ENCODE measurements at regions of chr11 and their contacts with region 1.

Region 1: DNA sequence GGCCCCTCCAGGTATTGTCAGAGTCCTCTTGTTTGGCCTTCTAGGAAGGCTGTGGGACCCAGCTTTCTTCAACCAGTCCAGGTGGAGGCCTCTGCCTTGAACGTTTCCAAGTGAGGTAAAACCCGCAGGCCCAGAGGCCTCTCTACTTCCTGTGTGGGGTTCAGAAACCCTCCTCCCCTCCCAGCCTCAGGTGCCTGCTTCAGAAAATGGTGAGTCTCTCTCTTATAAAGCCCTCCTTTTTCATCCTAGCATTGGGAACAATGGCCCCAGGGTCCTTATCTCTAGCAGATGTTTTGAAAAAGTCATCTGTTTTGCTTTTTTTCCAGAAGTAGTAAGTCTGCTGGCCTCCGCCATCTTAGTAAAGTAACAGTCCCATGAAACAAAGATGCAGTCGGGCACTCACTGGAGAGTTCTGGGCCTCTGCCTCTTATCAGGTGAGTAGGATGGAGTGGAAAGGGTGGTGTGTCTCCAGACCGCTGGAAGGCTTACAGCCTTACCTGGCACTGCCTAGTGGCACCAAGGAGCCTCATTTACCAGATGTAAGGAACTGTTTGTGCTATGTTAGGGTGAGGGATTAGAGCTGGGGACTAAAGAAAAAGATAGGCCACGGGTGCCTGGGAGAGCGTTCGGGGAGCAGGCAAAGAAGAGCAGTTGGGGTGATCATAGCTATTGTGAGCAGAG is at the start of gene CD3E:
- DNase-seq: peak; percentile 51 to 84 (median 64)
- ATAC-seq: peak; percentile 73
- H3K4me3 ChIP-seq: peak within 1 kb of the TSS; percentile 68
- H3K4me3 Mint-ChIP-seq: peak within 1 kb of the TSS; percentile 96
- H3K27ac ChIP-seq: peak within 1 kb of the TSS; percentile 81 to 88
- H3K27ac Mint-ChIP-seq: peak within 1 kb of the TSS; percentile 100
- H3K4me1 ChIP-seq: peaks cover 64% of the 10 kb centered on the region
- H3K4me1 Mint-ChIP-seq: peaks cover 87% of the 10 kb centered on the region
- H3K27me3 ChIP-seq: no peaks in the 10 kb centered on the region
- H3K27me3 Mint-ChIP-seq: no peaks in the 10 kb centered on the region
- CTCF ChIP-seq: no peak
- total RNA-seq, gene CD3E: 483 to 515 TPM

Region 2: GRCh38 chr11:118216621-118217481 is 87.9 kb before region 1 on chr11:
- CTCF ChIA-PET with region 1: interaction called, 3 read pairs
- POLR2A ChIA-PET with region 1: interaction called, 6 read pairs
- intact Hi-C with region 1: loop called in 1 of 2 experiments (anchors 5 kb)
- DNase-seq: peak in 11 of 14 experiments; percentile 19 to 80 (median 37)
- ATAC-seq: peak; percentile 75
- H3K4me3 ChIP-seq: peak overlapping the region; percentile 40
- H3K4me3 Mint-ChIP-seq: peak overlapping the region; percentile 84
- H3K27ac ChIP-seq: peak overlapping the region; percentile 10 to 52
- H3K27ac Mint-ChIP-seq: no peak overlapping the region
- H3K4me1 ChIP-seq: peaks cover 89% of the 10 kb centered on the region
- H3K4me1 Mint-ChIP-seq: peaks cover 99% of the 10 kb centered on the region
- H3K27me3 ChIP-seq: no peaks in the 10 kb centered on the region
- H3K27me3 Mint-ChIP-seq: no peaks in the 10 kb centered on the region
- CTCF ChIP-seq: no peak

Region 3: GRCh38 chr11:118251858-118252652 is 52.7 kb before region 1 on chr11 and contains the start of gene MPZL3:
- CTCF ChIA-PET with region 1: no interaction called
- POLR2A ChIA-PET with region 1: interaction called, 12 read pairs
- intact Hi-C with region 1: loop called in 1 of 2 experiments (anchors 10 kb)
- DNase-seq: peak; percentile 72 to 96 (median 79)
- ATAC-seq: peak; percentile 86
- H3K4me3 ChIP-seq: peak within 1 kb of the TSS; percentile 79
- H3K4me3 Mint-ChIP-seq: peak within 1 kb of the TSS; percentile 96
- H3K27ac ChIP-seq: peak within 1 kb of the TSS; percentile 91 to 94
- H3K27ac Mint-ChIP-seq: peak within 1 kb of the TSS; percentile 98
- H3K4me1 ChIP-seq: peaks cover 13% of the 10 kb centered on the region
- H3K4me1 Mint-ChIP-seq: peaks cover 49% of the 10 kb centered on the region
- H3K27me3 ChIP-seq: no peaks in the 10 kb centered on the region
- H3K27me3 Mint-ChIP-seq: no peaks in the 10 kb centered on the region
- CTCF ChIP-seq: no peak
- total RNA-seq, gene MPZL3: 29.0 to 30.2 TPM

Region 4: DNA sequence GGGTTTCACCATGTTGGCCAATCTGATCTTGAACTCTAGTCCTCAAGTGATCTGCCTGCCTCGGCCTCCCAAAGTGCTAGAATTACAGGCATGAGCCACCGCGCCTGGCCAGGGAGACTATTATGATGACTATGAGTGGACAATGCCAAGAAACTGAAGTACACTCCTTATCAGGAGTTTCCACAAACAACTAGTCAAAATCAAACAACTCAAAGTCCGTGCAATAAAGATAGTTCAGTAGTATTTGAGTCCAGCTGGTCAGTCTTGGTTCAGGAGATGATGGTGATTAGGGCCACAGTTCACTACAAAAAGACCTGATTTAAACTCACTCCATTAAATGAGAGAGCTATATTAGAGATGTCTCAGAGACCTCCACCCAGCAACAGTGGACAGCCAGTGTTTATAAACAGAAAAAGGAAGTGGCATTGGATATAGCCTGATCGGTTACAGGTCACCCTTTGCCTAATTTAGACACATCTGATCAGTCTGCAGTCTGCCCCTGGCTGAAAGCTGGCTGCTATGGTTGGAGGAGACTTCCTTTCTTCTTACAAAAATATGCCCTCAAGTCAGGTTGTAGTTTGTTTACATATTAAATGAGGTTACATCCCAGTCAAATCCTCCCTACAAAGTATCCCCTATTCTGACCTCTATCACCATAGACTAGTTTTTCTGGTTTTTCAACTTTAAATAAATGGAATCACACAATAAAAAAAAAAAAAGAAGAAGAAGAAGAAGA is 16.8 kb after region 1 on chr11:
- CTCF ChIA-PET with region 1: no interaction called
- POLR2A ChIA-PET with region 1: interaction called, 11 read pairs
- intact Hi-C with region 1: no loop called
- DNase-seq: no peak
- ATAC-seq: no peak
- H3K4me3 ChIP-seq: no peak overlapping the region
- H3K4me3 Mint-ChIP-seq: peak overlapping the region; percentile 21
- H3K27ac ChIP-seq: no peak overlapping the region
- H3K27ac Mint-ChIP-seq: peak overlapping the region; percentile 100
- H3K4me1 ChIP-seq: peaks cover 63% of the 10 kb centered on the region
- H3K4me1 Mint-ChIP-seq: peaks cover 80% of the 10 kb centered on the region
- H3K27me3 ChIP-seq: no peaks in the 10 kb centered on the region
- H3K27me3 Mint-ChIP-seq: no peaks in the 10 kb centered on the region
- CTCF ChIP-seq: no peak

Region 5: GRCh38 chr11:118338637-118339061 is 33.9 kb after region 1 on chr11:
- CTCF ChIA-PET with region 1: interaction called, 5 read pairs
- POLR2A ChIA-PET with region 1: no interaction called
- intact Hi-C with region 1: loop called in 1 of 2 experiments (anchors 2 kb)
- DNase-seq: peak; percentile 61 to 96 (median 86)
- ATAC-seq: peak; percentile 66
- H3K4me3 ChIP-seq: peak overlapping the region; percentile 86
- H3K4me3 Mint-ChIP-seq: peak overlapping the region; percentile 97
- H3K27ac ChIP-seq: peak overlapping the region; percentile 90
- H3K27ac Mint-ChIP-seq: peak overlapping the region; percentile 98
- H3K4me1 ChIP-seq: peaks cover 62% of the 10 kb centered on the region
- H3K4me1 Mint-ChIP-seq: peaks cover 70% of the 10 kb centered on the region
- H3K27me3 ChIP-seq: no peaks in the 10 kb centered on the region
- H3K27me3 Mint-ChIP-seq: no peaks in the 10 kb centered on the region
- CTCF ChIP-seq: no peak

Region 6: DNA sequence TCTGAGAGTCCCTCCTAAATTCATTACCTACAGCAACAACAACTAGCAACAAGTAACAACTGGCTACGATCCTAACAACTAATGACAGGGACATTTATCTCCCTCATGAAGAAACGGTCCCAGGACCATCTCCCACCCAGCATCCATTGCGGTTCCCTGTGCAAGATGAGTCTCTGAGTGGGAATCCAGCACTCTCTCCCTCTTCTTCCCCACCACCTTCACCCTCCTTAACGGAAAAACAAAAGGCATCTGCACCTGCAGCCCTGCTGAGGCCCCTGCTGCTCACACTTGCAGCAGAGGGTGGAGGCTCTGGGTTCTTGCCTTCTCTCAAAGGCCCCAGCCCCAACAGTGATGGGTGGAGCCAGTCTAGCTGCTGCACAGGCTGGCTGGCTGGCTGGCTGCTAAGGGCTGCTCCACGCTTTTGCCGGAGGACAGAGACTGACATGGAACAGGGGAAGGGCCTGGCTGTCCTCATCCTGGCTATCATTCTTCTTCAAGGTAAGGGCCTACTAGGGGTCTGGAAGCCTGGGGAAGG is 39.3 kb after region 1 on chr11 and contains the start of gene CD3G:
- CTCF ChIA-PET with region 1: interaction called, 5 read pairs
- POLR2A ChIA-PET with region 1: no interaction called
- intact Hi-C with region 1: loop called (anchors 1 to 2 kb)
- DNase-seq: peak; percentile 63 to 86 (median 80)
- ATAC-seq: peak; percentile 75
- H3K4me3 ChIP-seq: peak within 1 kb of the TSS; percentile 86
- H3K4me3 Mint-ChIP-seq: peak within 1 kb of the TSS; percentile 97
- H3K27ac ChIP-seq: peak within 1 kb of the TSS; percentile 84 to 90
- H3K27ac Mint-ChIP-seq: peak within 1 kb of the TSS; percentile 98
- H3K4me1 ChIP-seq: peaks cover 61% of the 10 kb centered on the region
- H3K4me1 Mint-ChIP-seq: peaks cover 83% of the 10 kb centered on the region
- H3K27me3 ChIP-seq: no peaks in the 10 kb centered on the region
- H3K27me3 Mint-ChIP-seq: no peaks in the 10 kb centered on the region
- CTCF ChIP-seq: no peak
- total RNA-seq, gene CD3G: 102 to 109 TPM

Region 7: GRCh38 chr11:118359295-118359958 is 54.7 kb after region 1 on chr11 and contains the start of gene UBE4A:
- CTCF ChIA-PET with region 1: no interaction called
- POLR2A ChIA-PET with region 1: interaction called, 32 read pairs
- intact Hi-C with region 1: no loop called
- DNase-seq: peak; percentile 95 to 99 (median 98)
- ATAC-seq: peak; percentile 84
- H3K4me3 ChIP-seq: peak within 1 kb of the TSS; percentile 74
- H3K4me3 Mint-ChIP-seq: peak within 1 kb of the TSS; percentile 92
- H3K27ac ChIP-seq: peak within 1 kb of the TSS; percentile 89
- H3K27ac Mint-ChIP-seq: peak within 1 kb of the TSS; percentile 99
- H3K4me1 ChIP-seq: peaks cover 31% of the 10 kb centered on the region
- H3K4me1 Mint-ChIP-seq: peaks cover 60% of the 10 kb centered on the region
- H3K27me3 ChIP-seq: no peaks in the 10 kb centered on the region
- H3K27me3 Mint-ChIP-seq: peaks cover 8% of the 10 kb centered on the region
- CTCF ChIP-seq: no peak
- total RNA-seq, gene UBE4A: 40.1 to 43.0 TPM